Psoas muscle (tissue), 8 donors: ENCODE measurements at regions of chr17 and their contacts with region 1.

Region 1: GRCh38 chr17:69030145-69030544 is 30.6 kb downstream of the ABCA9 start:
- DNase-seq: no peak
- ATAC-seq: no peak
- H3K4me3 ChIP-seq: no peak overlapping the region
- H3K27ac ChIP-seq: no peak overlapping the region
- H3K4me1 ChIP-seq: no peaks in the 10 kb centered on the region
- H3K27me3 ChIP-seq: no peaks in the 10 kb centered on the region
- CTCF ChIP-seq: no peak

Region 2: GRCh38 chr17:69084911-69085310 is 54.8 kb after region 1 on chr17:
- intact Hi-C with region 1: loop called in 1 of 2 experiments (anchors 10 kb)
- DNase-seq: no peak
- ATAC-seq: no peak
- H3K4me3 ChIP-seq: no peak overlapping the region
- H3K27ac ChIP-seq: no peak overlapping the region
- H3K4me1 ChIP-seq: no peaks in the 10 kb centered on the region
- H3K27me3 ChIP-seq: no peaks in the 10 kb centered on the region
- CTCF ChIP-seq: no peak

Region 3: GRCh38 chr17:69098625-69099024 is 68.5 kb after region 1 on chr17:
- intact Hi-C with region 1: no loop called
- DNase-seq: no peak
- ATAC-seq: peak in 1 of 4 donors; percentile 66
- H3K4me3 ChIP-seq: no peak overlapping the region
- H3K27ac ChIP-seq: no peak overlapping the region
- H3K4me1 ChIP-seq: no peaks in the 10 kb centered on the region
- H3K27me3 ChIP-seq: no peaks in the 10 kb centered on the region
- CTCF ChIP-seq: no peak